CD4-positive, alpha-beta memory T cell (primary cell): ENCODE measurements at regions of chr22 and their contacts with region 1.

Region 1: GRCh38 chr22:23716811-23717801 is 26.3 kb downstream of the RGL4 start:
- DNase-seq: peak; percentile 77 to 83 (median 81)
- H3K4me3 ChIP-seq: peak overlapping the region; percentile 62 to 69
- H3K4me3 Mint-ChIP-seq: peak overlapping the region; percentile 73 to 87 (median 84)
- H3K27ac ChIP-seq: peak overlapping the region; percentile 77
- H3K27ac Mint-ChIP-seq: peak overlapping the region; percentile 60 to 93 (median 87)
- H3K4me1 ChIP-seq: peaks cover 21% of the 10 kb centered on the region
- H3K4me1 Mint-ChIP-seq: peaks cover 7 to 28% (median 13%) of the 10 kb centered on the region in 4 donors
- H3K27me3 ChIP-seq: no peaks in the 10 kb centered on the region
- H3K27me3 Mint-ChIP-seq: no peaks in the 10 kb centered on the region

Region 2: DNA sequence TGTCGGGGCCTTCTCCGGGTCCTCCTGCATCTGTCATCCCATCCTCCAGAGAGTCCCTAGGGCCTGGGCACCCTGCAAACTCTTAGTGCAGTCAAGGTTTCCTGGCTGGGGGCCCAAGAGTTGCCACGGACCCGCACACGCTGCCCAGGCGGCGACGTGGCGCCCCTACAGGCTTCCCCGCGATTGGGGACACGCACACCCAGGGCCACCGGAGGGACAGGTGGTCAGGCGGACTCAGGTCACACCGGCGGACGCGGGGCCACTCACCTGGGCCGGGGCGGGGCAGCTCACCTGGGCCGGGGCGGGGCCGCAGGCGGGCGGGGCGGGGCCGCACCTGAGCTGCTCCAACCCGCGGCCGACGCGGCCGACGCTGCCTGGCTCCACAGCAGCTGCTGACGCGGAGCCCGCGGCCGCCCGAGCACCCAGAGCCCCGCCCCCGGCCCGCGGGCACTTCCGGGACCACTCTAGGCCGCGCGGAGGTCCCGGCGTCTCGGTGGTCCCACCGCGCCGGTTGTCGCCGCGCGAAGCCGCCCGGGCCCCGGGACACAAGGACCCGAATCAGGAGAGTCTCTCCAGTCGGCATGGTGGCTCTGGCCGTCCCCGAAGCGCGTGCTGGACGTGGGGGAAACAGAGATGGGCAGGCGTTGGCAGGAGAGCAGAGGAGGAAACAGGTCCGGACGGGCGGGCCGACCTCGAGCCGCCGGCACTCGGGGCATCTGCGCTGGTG is 33.8 kb after region 1 on chr22 and contains the start of gene ZNF70:
- CTCF ChIA-PET with region 1: interaction called, 3 read pairs
- POLR2A ChIA-PET with region 1: interaction called, 14 read pairs
- intact Hi-C with region 1: loop called (anchors 5 kb)
- DNase-seq: peak; percentile 83 to 88 (median 86)
- H3K4me3 ChIP-seq: peak within 1 kb of the TSS; percentile 73 to 82
- H3K4me3 Mint-ChIP-seq: peak within 1 kb of the TSS; percentile 76 to 85 (median 80)
- H3K27ac ChIP-seq: peak within 1 kb of the TSS; percentile 67
- H3K27ac Mint-ChIP-seq: peak within 1 kb of the TSS; percentile 69 to 87 (median 78)
- H3K4me1 ChIP-seq: peaks cover 13% of the 10 kb centered on the region
- H3K4me1 Mint-ChIP-seq: peaks cover 7 to 21% (median 12%) of the 10 kb centered on the region in 4 donors
- H3K27me3 ChIP-seq: no peaks in the 10 kb centered on the region
- H3K27me3 Mint-ChIP-seq: no peaks in the 10 kb centered on the region
- total RNA-seq, gene ZNF70: 6.4 to 7.4 TPM

Region 3: DNA sequence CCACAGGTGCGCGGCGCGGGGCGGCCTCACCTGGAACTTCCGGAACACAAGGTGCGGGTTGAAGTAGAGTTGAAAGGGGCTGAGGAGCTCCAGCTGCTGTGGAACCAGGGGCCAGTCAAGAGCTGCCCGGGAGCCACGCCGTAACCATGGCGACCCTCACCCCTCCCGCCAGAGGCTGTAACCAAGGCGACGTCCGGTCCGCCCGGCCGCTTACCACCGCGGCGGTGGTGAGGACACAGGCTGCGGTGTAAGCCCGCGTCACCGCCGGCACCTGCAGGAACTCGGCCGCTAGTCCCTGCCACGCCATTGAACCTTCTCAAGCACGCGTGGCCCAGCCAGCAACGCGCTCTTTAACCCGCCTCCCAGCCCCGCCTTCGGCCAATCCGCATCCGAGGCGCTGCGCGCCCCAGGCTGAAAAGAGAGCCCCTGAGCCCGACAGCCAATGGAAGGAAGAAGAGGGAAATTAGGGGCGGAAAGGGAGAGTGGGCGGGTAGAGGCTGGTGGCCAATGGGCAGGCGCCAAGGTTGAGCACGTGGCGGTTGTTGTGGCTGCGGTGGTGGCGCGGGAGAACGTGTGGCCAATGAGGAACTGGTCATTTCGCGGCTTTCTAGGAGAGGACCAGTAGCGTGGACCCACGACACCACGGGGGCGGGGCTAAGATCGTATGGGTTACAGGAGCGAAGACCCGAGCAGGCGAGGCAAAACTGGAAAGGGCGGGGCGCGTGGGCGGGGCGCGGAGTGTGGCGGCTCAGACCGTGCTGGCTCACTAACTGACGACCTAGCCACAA is 121.8 kb after region 1 on chr22 and contains the start of gene DERL3:
- CTCF ChIA-PET with region 1: no interaction called
- POLR2A ChIA-PET with region 1: no interaction called
- intact Hi-C with region 1: loop called (anchors 5 kb)
- DNase-seq: peak; percentile 93 to 96 (median 95)
- H3K4me3 ChIP-seq: peak within 1 kb of the TSS in 1 of 2 donors; percentile 83
- H3K4me3 Mint-ChIP-seq: peak within 1 kb of the TSS; percentile 85 to 96 (median 91)
- H3K27ac ChIP-seq: peak within 1 kb of the TSS; percentile 24
- H3K27ac Mint-ChIP-seq: peak within 1 kb of the TSS; percentile 83 to 97 (median 93)
- H3K4me1 ChIP-seq: peaks cover 14% of the 10 kb centered on the region
- H3K4me1 Mint-ChIP-seq: peaks cover 14 to 30% (median 20%) of the 10 kb centered on the region in 4 donors
- H3K27me3 ChIP-seq: no peaks in the 10 kb centered on the region
- H3K27me3 Mint-ChIP-seq: no peaks in the 10 kb centered on the region
- total RNA-seq, gene DERL3: 1.9 to 2.9 TPM